Esophagus muscularis mucosa (tissue), 4 donors: ENCODE measurements at regions of chr14 and their contacts with region 1.

Region 1: DNA sequence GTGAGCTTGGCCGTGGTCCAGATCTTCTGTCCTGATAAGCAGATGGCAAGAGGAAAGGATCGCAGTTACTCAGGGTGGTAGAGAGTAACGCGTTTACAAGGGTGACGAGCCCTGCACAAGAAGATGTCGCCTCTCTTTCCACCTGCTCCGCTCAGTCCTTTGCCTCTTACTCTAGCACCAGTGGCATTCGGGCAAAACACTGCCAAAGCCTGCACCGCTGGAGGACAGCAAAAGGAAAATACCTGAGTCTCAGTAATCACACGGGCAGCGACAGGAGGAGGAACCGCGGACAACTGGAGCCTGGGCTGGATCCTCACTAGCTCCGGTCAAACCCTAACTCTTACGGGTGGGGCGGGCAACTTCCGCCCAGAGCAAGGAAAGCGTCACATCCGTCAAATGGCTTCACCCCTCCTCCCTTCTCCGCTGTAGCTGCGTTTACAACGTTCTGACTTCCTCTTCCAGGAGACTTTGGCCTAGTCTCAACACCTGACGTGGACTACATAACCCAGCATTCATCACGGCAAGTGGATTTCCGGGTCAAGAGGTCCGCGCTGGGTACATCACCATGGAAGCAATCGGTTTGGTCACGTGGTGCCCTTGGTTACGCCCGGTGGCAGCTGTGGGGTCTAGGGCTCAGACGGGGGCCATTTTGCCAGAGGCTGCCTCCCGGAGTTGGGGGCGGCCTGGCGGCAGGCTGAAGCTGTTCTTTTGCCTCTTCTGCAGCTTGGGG is at the starts of genes KLHL28 and TOGARAM1:
- DNase-seq: peak; percentile 100
- H3K4me3 ChIP-seq: peak within 1 kb of the TSS; percentile 83 to 95 (median 86)
- H3K27ac ChIP-seq: peak within 1 kb of the TSS; percentile 89 to 95 (median 92)
- H3K4me1 ChIP-seq: peaks cover 30 to 81% (median 75%) of the 10 kb centered on the region in 4 donors
- H3K27me3 ChIP-seq: no peaks in the 10 kb centered on the region
- CTCF ChIP-seq: no peak
- EP300 ChIP-seq: no peak
- POLR2A ChIP-seq: peak; percentile 32
- total RNA-seq, gene KLHL28: 7.6 to 10.8 (median 8.9) TPM
- total RNA-seq, gene TOGARAM1: 11.8 to 17.9 (median 14.9) TPM

Region 2: GRCh38 chr14:44701563-44702263 is 260.1 kb before region 1 on chr14:
- intact Hi-C with region 1: no loop called
- DNase-seq: no peak
- H3K4me3 ChIP-seq: no peak overlapping the region
- H3K27ac ChIP-seq: no peak overlapping the region
- H3K4me1 ChIP-seq: no peaks in the 10 kb centered on the region
- H3K27me3 ChIP-seq: no peaks in the 10 kb centered on the region
- CTCF ChIP-seq: no peak
- EP300 ChIP-seq: no peak
- POLR2A ChIP-seq: no peak

Region 3: DNA sequence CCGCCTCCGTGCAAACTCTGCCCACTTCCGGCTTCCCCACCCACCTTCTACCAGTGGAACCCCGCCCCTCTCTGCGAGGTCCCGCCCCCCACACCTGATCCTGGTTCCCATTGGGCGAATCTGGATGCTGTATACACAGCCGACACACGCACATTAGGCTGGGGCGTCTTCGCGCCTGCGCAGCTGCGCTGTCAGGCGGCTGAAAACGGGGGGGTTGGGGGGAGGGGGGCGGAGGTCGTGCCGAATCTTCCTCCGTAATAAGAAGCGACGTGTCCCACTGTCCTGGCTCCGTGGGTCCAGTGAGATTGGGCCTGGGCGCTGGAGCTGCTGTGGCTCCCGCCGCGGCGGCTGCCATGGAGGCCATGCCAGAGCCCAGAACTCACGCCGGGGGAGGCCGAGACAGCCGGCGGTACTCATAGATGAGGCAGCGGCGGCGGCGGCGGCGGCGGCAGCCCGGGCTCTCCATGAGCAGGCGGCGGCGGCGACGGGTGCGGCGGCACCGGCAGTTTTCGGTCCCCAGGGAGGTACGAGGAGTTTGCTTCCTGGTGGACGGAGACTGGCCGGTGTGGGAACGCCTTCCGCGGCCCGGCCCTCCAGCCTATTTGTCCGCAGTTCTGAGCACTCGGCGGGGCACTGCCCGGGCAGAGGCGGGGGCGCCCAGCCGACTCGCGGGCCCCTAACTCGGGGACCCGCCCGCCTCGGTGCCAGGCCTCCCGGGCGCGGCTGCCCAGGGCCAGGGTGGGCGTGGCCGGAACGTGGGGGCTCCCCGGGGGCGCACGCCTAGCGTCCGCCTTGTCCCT is 64.5 kb before region 1 on chr14:
- intact Hi-C with region 1: loop called (anchors 5 kb)
- DNase-seq: peak; percentile 100
- H3K4me3 ChIP-seq: peak overlapping the region; percentile 83 to 94 (median 90)
- H3K27ac ChIP-seq: peak overlapping the region; percentile 97 to 100 (median 100)
- H3K4me1 ChIP-seq: peaks cover 20 to 56% (median 46%) of the 10 kb centered on the region in 4 donors
- H3K27me3 ChIP-seq: no peaks in the 10 kb centered on the region
- CTCF ChIP-seq: no peak
- EP300 ChIP-seq: no peak
- POLR2A ChIP-seq: peak; percentile 43

Region 4: GRCh38 chr14:44912041-44912869 is 49.5 kb before region 1 on chr14:
- intact Hi-C with region 1: loop called (anchors 5 kb)
- DNase-seq: no peak
- H3K4me3 ChIP-seq: peak overlapping the region; percentile 67 to 73 (median 69)
- H3K27ac ChIP-seq: peak overlapping the region; percentile 18 to 57 (median 42)
- H3K4me1 ChIP-seq: peaks cover 5 to 21% (median 18%) of the 10 kb centered on the region in 4 donors
- H3K27me3 ChIP-seq: peaks cover 0 to 9% (median 3%) of the 10 kb centered on the region in 4 donors
- CTCF ChIP-seq: no peak
- EP300 ChIP-seq: no peak
- POLR2A ChIP-seq: no peak

Region 5: DNA sequence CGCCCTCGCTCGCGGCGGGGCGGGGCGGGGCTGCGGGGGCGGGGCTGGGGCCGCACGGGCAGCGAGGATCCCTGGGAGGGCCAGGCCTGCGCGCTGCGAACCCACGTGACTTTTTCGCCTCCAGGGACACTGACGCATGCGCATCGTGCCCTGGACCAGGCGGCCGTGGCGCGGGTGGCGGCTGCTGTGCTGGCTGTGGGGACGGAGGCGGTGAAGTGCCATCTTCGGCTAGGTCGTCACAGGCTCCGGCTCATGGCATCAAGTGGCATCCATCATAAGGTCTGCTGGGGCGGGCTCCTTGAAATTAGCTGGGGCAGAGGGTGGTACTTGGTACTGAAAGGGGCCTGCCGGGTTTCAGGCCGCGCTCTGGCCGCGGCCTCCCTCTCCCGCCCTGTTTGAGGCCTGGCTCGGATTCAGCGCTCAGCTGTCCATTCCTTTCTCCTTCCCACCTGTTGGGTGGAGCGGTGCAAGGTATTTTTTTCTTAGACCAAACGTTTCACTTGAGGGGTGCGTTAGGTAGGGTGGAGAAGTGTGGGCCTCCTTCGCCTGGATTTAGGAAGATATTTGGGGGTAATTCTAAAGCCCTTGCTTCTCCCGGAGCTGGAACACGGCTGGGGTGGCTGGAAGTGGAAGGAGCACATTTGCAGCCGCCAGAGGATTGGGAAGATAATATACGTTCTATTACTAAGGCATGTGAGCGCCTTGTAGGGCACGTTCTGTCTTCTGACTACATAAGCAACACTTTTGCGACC is 122.4 kb after region 1 on chr14 and contains the start of gene PRPF39:
- intact Hi-C with region 1: loop called (anchors 5 kb)
- DNase-seq: peak; percentile 97
- H3K4me3 ChIP-seq: peak within 1 kb of the TSS; percentile 59 to 74 (median 68)
- H3K27ac ChIP-seq: peak within 1 kb of the TSS; percentile 81 to 85 (median 83)
- H3K4me1 ChIP-seq: peaks cover 17 to 52% (median 47%) of the 10 kb centered on the region in 4 donors
- H3K27me3 ChIP-seq: no peaks in the 10 kb centered on the region
- CTCF ChIP-seq: no peak
- EP300 ChIP-seq: no peak
- POLR2A ChIP-seq: peak; percentile 80
- total RNA-seq, gene PRPF39: 11.7 to 33.6 (median 16.8) TPM

Region 6: GRCh38 chr14:45134051-45134958 is 172.5 kb after region 1 on chr14 and contains the start of gene FKBP3:
- intact Hi-C with region 1: loop called (anchors 2 kb)
- DNase-seq: peak; percentile 97
- H3K4me3 ChIP-seq: peak within 1 kb of the TSS; percentile 70 to 86 (median 74)
- H3K27ac ChIP-seq: peak within 1 kb of the TSS; percentile 83 to 90 (median 86)
- H3K4me1 ChIP-seq: peaks cover 18 to 48% (median 42%) of the 10 kb centered on the region in 4 donors
- H3K27me3 ChIP-seq: no peaks in the 10 kb centered on the region
- CTCF ChIP-seq: peak in 1 of 3 experiments; percentile 10
- EP300 ChIP-seq: no peak
- POLR2A ChIP-seq: peak; percentile 58
- total RNA-seq, gene FKBP3: 28.5 to 68.1 (median 31.3) TPM

Region 7: GRCh38 chr14:45253068-45253753 is 291.4 kb after region 1 on chr14 and contains the start of gene MIS18BP1:
- intact Hi-C with region 1: loop called (anchors 10 kb)
- DNase-seq: peak; percentile 98
- H3K4me3 ChIP-seq: peak within 1 kb of the TSS; percentile 73 to 89 (median 78)
- H3K27ac ChIP-seq: peak within 1 kb of the TSS; percentile 86 to 93 (median 91)
- H3K4me1 ChIP-seq: peaks cover 18 to 43% (median 30%) of the 10 kb centered on the region in 4 donors
- H3K27me3 ChIP-seq: no peaks in the 10 kb centered on the region
- CTCF ChIP-seq: peak; percentile 60 to 77 (median 63)
- EP300 ChIP-seq: peak; percentile 23
- POLR2A ChIP-seq: peak; percentile 40
- total RNA-seq, gene MIS18BP1: 10.8 to 20.8 (median 12.7) TPM